A673 (cell line): ENCODE measurements at regions of chr7 and their contacts with region 1.

Region 1: GRCh38 chr7:38107486-38107893 is 70.6 kb upstream of the STARD3NL start:
- DNase-seq: peak; percentile 66
- H3K4me3 ChIP-seq: no peak overlapping the region
- H3K27ac ChIP-seq: no peak overlapping the region
- H3K4me1 ChIP-seq: no peaks in the 10 kb centered on the region
- H3K27me3 ChIP-seq: peaks cover 22% of the 10 kb centered on the region
- CTCF ChIP-seq: peak; percentile 83

Region 2: DNA sequence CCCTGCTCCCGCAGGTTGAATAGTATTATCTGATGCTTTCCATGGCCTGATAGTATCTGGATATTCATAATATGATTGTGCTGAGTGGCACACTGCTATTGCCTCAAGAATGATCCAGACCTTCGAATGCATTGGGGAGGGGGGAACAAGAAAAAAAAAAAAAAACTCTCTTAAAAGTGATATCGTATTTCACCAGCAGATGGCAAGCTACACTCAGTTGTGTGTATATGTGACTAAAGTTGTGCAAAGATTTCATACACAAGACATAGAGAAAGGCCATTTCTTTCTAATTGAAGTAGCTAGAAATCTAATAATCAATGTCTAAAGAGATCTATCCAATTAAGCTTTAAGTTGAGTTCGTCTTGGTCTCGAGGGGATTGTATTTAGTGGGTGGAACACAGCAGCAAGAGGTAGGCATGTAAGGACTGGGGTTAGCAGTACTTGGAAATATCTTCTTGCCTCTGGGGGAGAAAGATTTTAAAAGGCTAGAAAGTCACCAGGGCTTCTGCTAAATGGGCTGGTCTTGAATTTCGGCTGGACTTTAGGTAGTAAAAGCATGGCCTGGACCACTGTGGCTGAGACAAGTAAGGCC is 206.2 kb before region 1 on chr7:
- CTCF ChIA-PET with region 1: no interaction called
- POLR2A ChIA-PET with region 1: no interaction called
- intact Hi-C with region 1: loop called (anchors 5 kb)
- DNase-seq: peak; percentile 65
- H3K4me3 ChIP-seq: no peak overlapping the region
- H3K27ac ChIP-seq: no peak overlapping the region
- H3K4me1 ChIP-seq: no peaks in the 10 kb centered on the region
- H3K27me3 ChIP-seq: peaks cover 2% of the 10 kb centered on the region
- CTCF ChIP-seq: peak; percentile 73

Region 3: DNA sequence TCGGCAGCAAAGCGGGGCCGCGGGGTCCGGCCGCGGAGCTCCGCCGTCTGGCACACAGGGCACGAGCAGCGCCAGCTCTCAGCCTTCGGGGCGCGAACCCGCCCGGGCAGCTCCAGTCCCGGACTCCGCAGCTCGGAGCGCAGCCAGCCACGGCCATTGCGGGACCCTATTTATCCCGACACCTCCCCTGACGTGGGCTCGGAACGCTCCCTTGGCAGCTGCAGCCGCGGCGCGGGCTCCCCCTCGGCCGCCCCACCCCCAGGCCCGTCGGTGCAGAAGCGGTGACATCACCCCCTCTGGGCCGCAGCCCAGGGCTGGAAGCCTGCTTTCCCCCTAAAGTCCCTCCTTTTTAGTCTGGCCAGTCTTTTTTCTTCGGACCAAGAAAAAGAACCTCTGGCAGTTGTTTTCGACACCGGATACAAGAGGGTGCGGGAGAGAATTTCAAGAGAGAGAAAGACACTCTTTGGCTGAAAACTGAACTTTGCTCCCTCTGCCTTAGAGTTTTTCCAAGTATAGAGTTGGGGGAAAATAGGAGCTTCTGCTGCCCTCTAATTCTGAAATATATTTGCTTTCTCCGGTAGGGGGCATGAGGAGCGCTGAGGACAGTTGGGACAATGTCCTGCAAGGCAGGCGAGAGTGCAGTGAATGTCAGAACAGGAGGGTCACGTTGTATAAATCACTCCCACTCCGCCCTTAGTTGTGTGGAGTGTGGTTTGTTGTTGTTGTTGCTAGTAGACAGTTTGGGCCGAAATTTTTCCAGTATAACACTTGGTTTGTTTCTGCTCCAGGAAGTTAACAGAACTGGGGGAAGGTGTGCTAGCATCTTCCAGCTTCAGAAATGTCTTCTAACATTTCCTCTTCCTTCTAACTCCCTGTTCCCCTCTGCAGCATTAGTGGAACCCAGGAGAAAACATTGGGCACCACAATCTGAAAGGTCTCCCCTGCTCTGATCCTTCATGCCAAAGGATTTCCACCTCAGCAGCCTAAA is 190.5 kb before region 1 on chr7 and contains the start of gene SFRP4:
- CTCF ChIA-PET with region 1: no interaction called
- POLR2A ChIA-PET with region 1: no interaction called
- intact Hi-C with region 1: loop called (anchors 5 kb)
- DNase-seq: peak; percentile 67
- H3K4me3 ChIP-seq: peak within 1 kb of the TSS; percentile 43
- H3K27ac ChIP-seq: no peak within 1 kb of the TSS
- H3K4me1 ChIP-seq: peaks cover 20% of the 10 kb centered on the region
- H3K27me3 ChIP-seq: peaks cover 42% of the 10 kb centered on the region
- CTCF ChIP-seq: peak; percentile 72
- total RNA-seq, gene SFRP4: not detected in 2 replicates

Region 4: GRCh38 chr7:37952240-37952639 is 155.2 kb before region 1 on chr7:
- CTCF ChIA-PET with region 1: no interaction called
- POLR2A ChIA-PET with region 1: no interaction called
- intact Hi-C with region 1: no loop called
- DNase-seq: no peak
- H3K4me3 ChIP-seq: no peak overlapping the region
- H3K27ac ChIP-seq: no peak overlapping the region
- H3K4me1 ChIP-seq: no peaks in the 10 kb centered on the region
- H3K27me3 ChIP-seq: no peaks in the 10 kb centered on the region
- CTCF ChIP-seq: no peak

Region 5: GRCh38 chr7:38222481-38223096 is 115.1 kb after region 1 on chr7:
- CTCF ChIA-PET with region 1: no interaction called
- POLR2A ChIA-PET with region 1: no interaction called
- intact Hi-C with region 1: loop called (anchors 1 kb)
- DNase-seq: peak; percentile 63
- H3K4me3 ChIP-seq: no peak overlapping the region
- H3K27ac ChIP-seq: no peak overlapping the region
- H3K4me1 ChIP-seq: no peaks in the 10 kb centered on the region
- H3K27me3 ChIP-seq: no peaks in the 10 kb centered on the region
- CTCF ChIP-seq: peak; percentile 76

Region 6: DNA sequence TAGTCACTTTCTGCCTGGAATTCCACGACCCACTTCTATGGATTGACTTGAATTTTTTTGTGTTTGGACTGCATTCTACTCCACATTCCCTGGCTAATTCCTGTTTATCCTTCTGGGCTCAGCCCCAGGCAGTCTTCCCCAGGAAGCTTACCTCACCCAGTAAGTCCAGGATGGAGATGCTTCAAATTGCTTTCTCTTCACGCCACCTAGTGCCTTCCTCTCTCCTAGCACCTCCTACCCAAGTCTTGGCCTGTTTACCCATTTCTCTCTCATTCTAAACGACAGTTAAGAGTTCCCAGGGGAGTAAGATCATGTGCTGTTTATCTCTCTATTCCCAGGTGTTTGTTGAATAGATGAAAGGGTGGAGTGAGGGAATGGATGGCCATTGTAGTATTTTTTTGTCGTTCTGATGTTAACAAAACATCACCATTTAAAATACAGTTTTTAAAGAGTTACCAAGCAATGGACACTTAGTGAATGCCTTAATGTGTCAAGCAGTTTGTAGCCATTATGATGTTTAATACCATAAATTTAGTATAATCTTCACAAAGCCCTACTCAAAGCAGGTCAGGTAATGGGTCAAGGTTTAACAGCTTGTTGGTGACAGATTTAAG is 211.4 kb after region 1 on chr7:
- CTCF ChIA-PET with region 1: no interaction called
- POLR2A ChIA-PET with region 1: no interaction called
- intact Hi-C with region 1: loop called (anchors 2 kb)
- DNase-seq: peak; percentile 82
- H3K4me3 ChIP-seq: no peak overlapping the region
- H3K27ac ChIP-seq: no peak overlapping the region
- H3K4me1 ChIP-seq: no peaks in the 10 kb centered on the region
- H3K27me3 ChIP-seq: no peaks in the 10 kb centered on the region
- CTCF ChIP-seq: peak; percentile 79

Region 7: GRCh38 chr7:38335492-38336147 is 228.1 kb after region 1 on chr7:
- CTCF ChIA-PET with region 1: interaction called, 3 read pairs
- POLR2A ChIA-PET with region 1: no interaction called
- intact Hi-C with region 1: loop called (anchors 2 kb)
- DNase-seq: peak; percentile 91
- H3K4me3 ChIP-seq: no peak overlapping the region
- H3K27ac ChIP-seq: no peak overlapping the region
- H3K4me1 ChIP-seq: peaks cover 8% of the 10 kb centered on the region
- H3K27me3 ChIP-seq: no peaks in the 10 kb centered on the region
- CTCF ChIP-seq: peak; percentile 98

Region 8: DNA sequence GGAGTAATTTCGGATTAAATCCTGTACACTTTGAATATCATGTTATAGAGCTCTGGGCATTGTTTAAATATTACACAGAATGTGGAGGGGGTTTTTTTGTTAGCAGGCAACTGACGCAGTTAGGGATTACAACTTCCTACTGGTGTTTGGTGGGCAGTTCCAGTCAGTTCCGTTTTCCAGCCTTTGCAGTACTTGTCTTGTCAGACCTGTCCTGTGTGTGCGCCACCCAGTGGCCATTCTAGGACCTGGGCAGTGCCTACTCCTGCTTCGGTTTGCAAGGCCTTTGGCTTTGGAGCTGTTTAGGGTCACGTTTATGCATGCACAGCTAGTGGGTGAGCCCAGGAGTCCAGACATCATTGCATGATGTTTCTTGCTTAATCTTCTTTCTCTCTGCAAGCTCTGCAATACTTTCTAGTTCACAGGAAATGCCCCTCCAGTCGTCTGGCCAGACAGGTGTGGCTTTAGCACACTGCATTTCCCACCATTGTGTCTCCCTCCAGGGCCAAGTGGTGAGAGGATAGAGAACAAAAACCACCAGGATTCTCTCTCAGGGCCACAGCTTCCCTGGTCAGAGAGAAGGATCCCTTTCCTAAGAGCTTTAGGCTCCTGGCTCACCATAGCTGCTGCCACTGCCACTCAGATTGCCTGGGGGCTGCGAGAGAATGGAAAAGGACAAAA is 262.5 kb after region 1 on chr7:
- CTCF ChIA-PET with region 1: interaction called, 3 read pairs
- POLR2A ChIA-PET with region 1: no interaction called
- intact Hi-C with region 1: loop called (anchors 5 kb)
- DNase-seq: peak; percentile 87
- H3K4me3 ChIP-seq: no peak overlapping the region
- H3K27ac ChIP-seq: no peak overlapping the region
- H3K4me1 ChIP-seq: no peaks in the 10 kb centered on the region
- H3K27me3 ChIP-seq: no peaks in the 10 kb centered on the region
- CTCF ChIP-seq: peak; percentile 96